ENCODE measurements at regions of chr21 and their contacts with region 1.

Region 1: DNA sequence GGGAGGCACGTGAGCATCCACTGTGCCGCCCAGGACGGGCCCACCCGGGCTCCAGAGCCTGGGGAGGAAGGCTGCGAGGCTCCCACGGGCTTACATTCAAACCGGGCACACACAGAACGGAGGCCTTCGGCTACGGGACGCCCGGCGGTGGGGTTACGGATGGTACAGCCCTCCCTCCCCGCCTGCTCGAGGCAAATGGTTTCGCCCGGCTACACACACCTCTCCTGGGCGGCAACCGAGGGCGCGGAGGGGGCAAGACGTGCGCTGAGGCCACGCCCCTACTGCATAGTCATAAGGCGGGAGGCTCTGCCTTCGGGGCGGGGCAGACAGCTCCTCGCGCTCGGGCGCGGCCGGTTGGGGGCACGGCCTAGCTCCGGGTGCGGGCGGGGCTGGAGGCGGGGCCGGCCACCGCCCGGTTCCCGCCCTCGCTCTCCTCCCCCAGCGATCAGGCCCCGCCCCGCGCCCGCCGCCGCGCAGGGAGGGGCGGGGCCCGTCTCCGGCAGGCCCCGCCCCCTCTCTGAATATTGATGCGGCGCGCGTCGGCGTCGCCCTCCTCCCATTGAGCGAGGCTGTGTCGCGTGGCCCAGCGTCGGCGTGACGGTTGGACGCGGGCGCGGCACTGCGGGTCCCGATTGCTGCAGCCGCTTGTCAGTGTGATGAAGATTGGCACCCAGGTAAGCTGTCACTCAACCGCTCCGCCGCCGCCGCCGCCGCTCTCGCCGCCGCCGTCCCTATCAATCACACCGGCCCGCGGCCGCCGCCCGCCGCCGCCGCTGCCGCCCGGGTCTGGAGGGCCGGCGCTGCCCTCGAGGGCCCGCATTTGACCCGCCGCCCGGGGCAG is at the start of gene PKNOX1:
- DNase-seq: peak; percentile 97 to 100 (median 99)
- ATAC-seq: peak; percentile 83
- H3K4me3 ChIP-seq: peak within 1 kb of the TSS; percentile 86
- H3K4me3 Mint-ChIP-seq: peak within 1 kb of the TSS; percentile 98
- H3K27ac ChIP-seq: peak within 1 kb of the TSS; percentile 88 to 91
- H3K27ac Mint-ChIP-seq: peak within 1 kb of the TSS; percentile 97
- H3K4me1 ChIP-seq: peaks cover 19% of the 10 kb centered on the region
- H3K4me1 Mint-ChIP-seq: peaks cover 34% of the 10 kb centered on the region
- H3K27me3 ChIP-seq: no peaks in the 10 kb centered on the region
- H3K27me3 Mint-ChIP-seq: no peaks in the 10 kb centered on the region
- CTCF ChIP-seq: peak; percentile 27
- total RNA-seq, gene PKNOX1: 10.3 TPM

Region 2: GRCh38 chr21:42878993-42879787 is 95.0 kb before region 1 on chr21 and contains the start of gene WDR4:
- CTCF ChIA-PET with region 1: no interaction called
- POLR2A ChIA-PET with region 1: interaction called, 3 read pairs
- intact Hi-C with region 1: loop called (anchors 1 to 5 kb)
- DNase-seq: peak; percentile 98 to 100 (median 98)
- ATAC-seq: peak; percentile 90
- H3K4me3 ChIP-seq: peak within 1 kb of the TSS; percentile 74
- H3K4me3 Mint-ChIP-seq: peak within 1 kb of the TSS; percentile 99
- H3K27ac ChIP-seq: peak within 1 kb of the TSS; percentile 80 to 93
- H3K27ac Mint-ChIP-seq: peak within 1 kb of the TSS; percentile 95
- H3K4me1 ChIP-seq: peaks cover 25% of the 10 kb centered on the region
- H3K4me1 Mint-ChIP-seq: peaks cover 33% of the 10 kb centered on the region
- H3K27me3 ChIP-seq: no peaks in the 10 kb centered on the region
- H3K27me3 Mint-ChIP-seq: no peaks in the 10 kb centered on the region
- CTCF ChIP-seq: no peak
- total RNA-seq, gene WDR4: 11.3 to 12.9 TPM

Region 3: DNA sequence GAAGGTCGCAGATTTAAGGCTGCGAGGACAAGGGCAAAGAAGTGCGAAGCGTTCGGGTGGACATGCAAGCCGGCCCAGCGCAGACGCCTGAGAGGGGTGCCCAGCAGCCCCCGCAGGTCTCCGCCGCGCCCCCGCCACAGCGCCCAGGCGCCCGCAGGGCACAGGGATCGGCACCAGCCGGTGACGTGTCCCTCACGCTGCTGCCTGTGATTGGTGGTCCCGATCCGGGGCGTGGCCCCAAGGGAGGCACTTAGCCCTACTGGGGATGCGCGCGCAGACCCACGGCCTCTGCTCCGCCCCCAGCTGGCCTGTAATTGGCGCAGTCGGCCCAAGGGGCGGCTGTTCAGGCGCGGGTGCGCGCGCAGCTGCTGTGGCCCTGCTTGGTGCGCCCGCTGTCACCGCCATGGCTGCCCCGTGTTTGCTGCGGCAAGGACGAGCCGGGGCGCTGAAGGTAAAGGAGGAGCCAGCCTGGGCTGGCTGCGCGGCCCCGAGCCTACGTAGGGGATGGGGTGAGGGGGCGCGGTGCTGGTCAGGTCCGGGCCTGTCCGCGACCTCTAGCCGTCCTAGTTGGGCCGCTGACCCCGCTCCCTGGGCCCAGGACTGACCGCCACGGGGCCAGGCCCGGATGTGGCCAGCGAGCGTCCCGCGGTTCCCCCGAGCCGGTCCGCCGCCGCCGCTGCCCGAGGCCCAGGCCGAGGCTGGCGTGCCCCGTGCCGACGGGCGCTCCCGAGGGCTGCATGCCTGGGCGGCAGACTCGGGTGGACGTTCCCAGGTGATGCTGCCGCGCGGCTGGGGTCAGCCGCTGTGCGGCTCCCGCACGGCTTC is 81.1 kb before region 1 on chr21 and contains the start of gene NDUFV3:
- CTCF ChIA-PET with region 1: interaction called, 4 read pairs
- POLR2A ChIA-PET with region 1: interaction called, 27 read pairs
- intact Hi-C with region 1: loop called in 1 of 2 experiments (anchors 5 kb)
- DNase-seq: peak; percentile 100
- ATAC-seq: peak; percentile 93
- H3K4me3 ChIP-seq: peak within 1 kb of the TSS; percentile 76
- H3K4me3 Mint-ChIP-seq: peak within 1 kb of the TSS; percentile 91
- H3K27ac ChIP-seq: peak within 1 kb of the TSS; percentile 86
- H3K27ac Mint-ChIP-seq: peak within 1 kb of the TSS; percentile 97
- H3K4me1 ChIP-seq: peaks cover 12% of the 10 kb centered on the region
- H3K4me1 Mint-ChIP-seq: peaks cover 19% of the 10 kb centered on the region
- H3K27me3 ChIP-seq: no peaks in the 10 kb centered on the region
- H3K27me3 Mint-ChIP-seq: no peaks in the 10 kb centered on the region
- CTCF ChIP-seq: no peak
- total RNA-seq, gene NDUFV3: 15.3 to 15.8 TPM

Region 4: DNA sequence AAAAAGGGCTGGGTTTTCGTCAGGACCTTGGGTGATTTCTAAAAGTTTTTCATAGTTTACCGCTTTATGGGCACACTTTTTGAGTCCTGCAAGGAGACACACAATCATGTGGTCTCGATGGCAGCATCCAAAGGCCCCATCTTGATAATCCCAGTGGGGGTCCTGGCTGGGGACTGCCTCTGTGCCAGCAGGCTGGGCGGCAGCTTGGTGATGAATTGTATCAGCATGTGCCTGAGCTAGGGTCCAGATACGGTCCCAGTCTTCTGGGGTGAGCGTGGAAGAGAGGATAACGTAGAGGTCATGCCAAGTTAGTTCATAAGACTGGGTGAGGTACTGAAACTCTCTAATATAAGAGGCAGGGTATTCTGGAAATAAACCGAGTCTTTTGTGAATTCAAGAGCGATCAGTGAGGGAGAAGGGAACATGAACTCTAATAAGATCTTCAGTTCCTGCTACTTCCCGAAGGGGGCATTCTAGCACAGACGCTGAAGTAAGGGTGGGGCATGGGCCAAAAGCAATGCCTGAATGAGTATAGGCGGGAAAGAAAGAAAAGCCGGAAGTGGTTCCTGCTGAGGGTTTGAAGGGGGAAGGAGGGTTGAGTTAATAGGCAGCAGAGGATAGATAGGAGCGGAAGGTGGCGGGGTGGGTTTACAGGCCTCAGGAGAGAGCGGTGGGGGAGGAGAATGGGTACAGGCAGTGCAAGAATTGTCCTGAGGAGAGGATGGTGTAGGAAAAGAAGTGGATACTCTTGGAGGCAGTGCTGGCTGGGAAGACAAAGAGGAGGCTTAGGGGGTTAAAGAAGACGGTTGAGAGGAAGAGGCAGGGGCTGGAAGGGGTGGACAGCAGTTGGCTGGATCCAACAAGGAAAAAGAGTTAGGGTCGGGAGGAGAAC is 50.4 kb before region 1 on chr21:
- CTCF ChIA-PET with region 1: no interaction called
- POLR2A ChIA-PET with region 1: interaction called, 5 read pairs
- intact Hi-C with region 1: loop called in 1 of 2 experiments (anchors 2 kb)
- DNase-seq: peak; percentile 33 to 85 (median 54)
- ATAC-seq: peak; percentile 77
- H3K4me3 ChIP-seq: no peak overlapping the region
- H3K4me3 Mint-ChIP-seq: peak overlapping the region; percentile 72
- H3K27ac ChIP-seq: no peak overlapping the region
- H3K27ac Mint-ChIP-seq: peak overlapping the region; percentile 73
- H3K4me1 ChIP-seq: peaks cover 18% of the 10 kb centered on the region
- H3K4me1 Mint-ChIP-seq: peaks cover 22% of the 10 kb centered on the region
- H3K27me3 ChIP-seq: no peaks in the 10 kb centered on the region
- H3K27me3 Mint-ChIP-seq: no peaks in the 10 kb centered on the region
- CTCF ChIP-seq: peak; percentile 71

Region 5: DNA sequence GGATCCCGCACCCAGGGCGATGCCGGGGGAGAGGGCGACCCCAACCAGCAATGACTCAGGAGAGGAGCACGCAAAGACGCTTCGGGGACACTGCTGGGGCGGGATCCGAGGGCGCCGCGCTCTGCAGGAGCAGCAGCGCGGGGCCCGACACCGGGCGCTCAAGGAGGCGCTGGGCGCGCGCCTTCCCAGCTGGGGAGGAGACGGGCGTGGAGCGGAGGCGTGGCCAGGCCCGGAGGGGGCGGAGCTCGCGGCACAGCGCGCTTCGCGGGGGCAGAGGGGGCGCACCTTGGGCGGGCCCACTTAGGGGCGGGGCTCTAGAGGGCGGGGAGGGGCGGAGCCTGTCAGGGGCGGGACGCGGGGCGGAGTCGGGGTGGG is 1843.3 kb after region 1 on chr21:
- CTCF ChIA-PET with region 1: no interaction called
- POLR2A ChIA-PET with region 1: no interaction called
- intact Hi-C with region 1: loop called in 1 of 2 experiments (anchors 5 kb)
- DNase-seq: peak; percentile 87 to 97 (median 94)
- ATAC-seq: peak; percentile 85
- H3K4me3 ChIP-seq: peak overlapping the region; percentile 61
- H3K4me3 Mint-ChIP-seq: peak overlapping the region; percentile 82
- H3K27ac ChIP-seq: no peak overlapping the region
- H3K27ac Mint-ChIP-seq: peak overlapping the region; percentile 65
- H3K4me1 ChIP-seq: peaks cover 19% of the 10 kb centered on the region
- H3K4me1 Mint-ChIP-seq: peaks cover 13% of the 10 kb centered on the region
- H3K27me3 ChIP-seq: no peaks in the 10 kb centered on the region
- H3K27me3 Mint-ChIP-seq: no peaks in the 10 kb centered on the region
- CTCF ChIP-seq: no peak